AG04449 (cell line): ENCODE measurements at regions of chr12 and their contacts with region 1.

Region 1: GRCh38 chr12:32062881-32063280 is 43.8 kb upstream of the BICD1 start:
- DNase-seq: no peak
- H3K4me3 ChIP-seq: no peak overlapping the region
- CTCF ChIP-seq: no peak

Region 2: DNA sequence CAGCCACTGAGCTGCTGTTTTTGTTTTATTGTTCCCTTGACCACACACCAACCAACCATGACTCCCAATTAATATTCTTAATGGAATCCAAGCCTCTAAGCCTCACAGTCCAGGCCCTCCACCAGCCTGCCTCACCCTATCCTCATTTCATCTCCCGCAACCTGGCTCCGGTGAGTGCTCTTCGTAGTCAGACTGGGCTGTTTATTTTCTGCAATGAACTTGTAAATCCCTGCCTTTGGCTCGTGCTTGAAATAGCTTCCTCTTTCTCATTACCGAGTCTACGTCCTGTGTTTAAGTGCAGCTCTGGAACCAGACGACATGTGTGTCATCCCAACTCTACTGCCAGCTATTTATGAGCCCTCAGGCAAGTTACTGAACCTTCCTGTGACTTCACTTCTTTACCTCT is 415.8 kb before region 1 on chr12:
- CTCF ChIA-PET with region 1: interaction called, 31 read pairs
- POLR2A ChIA-PET with region 1: no interaction called
- DNase-seq: no peak
- H3K4me3 ChIP-seq: no peak overlapping the region
- CTCF ChIP-seq: no peak

Region 3: DNA sequence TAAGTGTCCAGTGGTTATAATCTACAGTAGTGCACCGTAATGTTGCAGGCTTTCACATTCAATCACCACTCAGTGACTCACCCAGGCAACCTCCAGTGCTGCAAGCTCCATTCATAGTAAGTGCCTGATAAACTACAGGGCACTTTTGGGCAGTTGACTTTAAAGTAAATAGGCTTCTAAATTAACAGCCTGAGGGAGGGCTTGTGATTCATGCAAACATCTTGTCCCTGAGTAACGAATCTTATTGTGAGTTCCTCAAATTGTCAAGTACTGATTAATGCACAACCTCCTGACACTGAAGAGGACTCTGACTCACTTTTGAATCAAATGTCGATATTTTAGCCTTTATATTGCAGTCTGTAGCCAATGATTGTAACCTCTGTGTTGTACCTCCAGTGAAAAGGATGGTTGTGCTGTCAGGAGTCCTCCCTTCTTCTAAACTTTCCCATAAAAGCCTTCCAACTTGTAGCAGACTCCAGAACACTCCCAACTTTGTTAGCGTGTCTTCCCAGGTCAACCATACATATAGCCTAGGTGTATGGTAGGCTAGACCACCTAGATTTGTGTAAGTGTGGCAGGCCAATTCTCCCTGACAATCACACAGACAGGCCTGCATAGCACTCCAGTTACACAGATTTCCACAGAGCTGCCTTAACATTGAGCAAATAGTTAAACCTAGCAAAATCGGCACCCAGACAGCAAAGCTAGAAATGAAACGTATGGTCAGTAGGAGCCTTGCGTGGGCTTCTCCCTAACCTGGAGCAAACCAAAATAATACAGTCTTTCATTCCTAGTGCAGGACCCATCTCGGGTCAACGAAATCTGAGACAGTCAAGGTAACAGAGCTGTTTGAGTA is 11.1 kb before region 1 on chr12:
- CTCF ChIA-PET with region 1: interaction called, 31 read pairs
- POLR2A ChIA-PET with region 1: no interaction called
- DNase-seq: peak; percentile 73
- H3K4me3 ChIP-seq: no peak overlapping the region
- CTCF ChIP-seq: no peak

Region 4: GRCh38 chr12:32076941-32077340 is 14.1 kb after region 1 on chr12:
- CTCF ChIA-PET with region 1: interaction called, 58 read pairs
- POLR2A ChIA-PET with region 1: no interaction called
- DNase-seq: no peak
- H3K4me3 ChIP-seq: no peak overlapping the region
- CTCF ChIP-seq: no peak

Region 5: GRCh38 chr12:32290411-32290810 is 227.5 kb after region 1 on chr12:
- CTCF ChIA-PET with region 1: interaction called, 10 read pairs
- POLR2A ChIA-PET with region 1: no interaction called
- DNase-seq: no peak
- H3K4me3 ChIP-seq: no peak overlapping the region
- CTCF ChIP-seq: no peak

Region 6: DNA sequence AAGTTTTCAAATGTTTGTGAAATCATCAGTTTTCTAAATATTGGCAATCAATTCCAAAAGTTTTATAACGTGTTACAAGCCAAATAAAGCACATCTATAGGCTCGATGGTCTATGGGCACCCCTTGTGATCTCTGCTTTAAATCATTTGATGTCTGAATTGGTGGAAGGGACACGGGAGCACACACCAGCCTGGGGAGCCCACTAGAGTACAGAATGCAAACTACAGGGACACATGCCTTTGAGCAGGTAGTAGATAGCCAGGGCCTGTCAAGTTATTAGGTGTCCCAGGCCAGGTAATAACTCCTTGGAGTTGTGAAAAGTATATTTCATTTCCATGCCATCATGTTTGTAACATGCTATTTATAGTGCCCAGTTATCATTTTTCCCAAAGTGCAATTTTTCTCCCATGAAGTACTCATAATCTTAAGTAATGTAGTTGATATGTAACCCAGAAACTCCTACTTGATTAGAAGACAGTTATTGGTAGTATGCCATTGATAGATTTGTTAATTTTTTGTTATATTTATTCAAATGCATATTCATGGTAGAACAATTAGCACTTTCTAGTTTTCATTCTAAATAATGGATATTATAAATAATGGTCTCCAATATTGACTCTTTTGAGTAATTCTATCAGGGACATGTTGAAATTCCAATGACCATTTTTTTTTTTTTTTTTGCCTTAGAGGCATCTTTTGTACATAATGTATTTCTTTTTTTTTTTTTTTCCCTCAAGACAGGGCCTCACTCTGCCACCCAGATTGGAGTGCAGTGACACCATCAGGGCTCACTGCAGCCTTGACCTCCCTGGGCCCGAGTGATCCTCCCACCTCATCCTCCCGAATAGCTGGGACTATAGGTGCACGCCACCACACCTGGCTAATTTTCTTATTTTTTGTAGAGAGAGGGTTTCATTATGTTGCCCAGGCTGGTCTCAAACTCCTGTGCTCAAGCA is 239.6 kb after region 1 on chr12:
- CTCF ChIA-PET with region 1: interaction called, 138 read pairs
- POLR2A ChIA-PET with region 1: no interaction called
- DNase-seq: no peak
- H3K4me3 ChIP-seq: no peak overlapping the region
- CTCF ChIP-seq: peak; percentile 54

Region 7: GRCh38 chr12:32312049-32312670 is 249.3 kb after region 1 on chr12:
- CTCF ChIA-PET with region 1: interaction called, 138 read pairs
- POLR2A ChIA-PET with region 1: interaction called, 5 read pairs
- DNase-seq: peak; percentile 14
- H3K4me3 ChIP-seq: no peak overlapping the region
- CTCF ChIP-seq: peak; percentile 32